ENCODE measurements at regions of chr4 and their contacts with region 1.

Region 1: DNA sequence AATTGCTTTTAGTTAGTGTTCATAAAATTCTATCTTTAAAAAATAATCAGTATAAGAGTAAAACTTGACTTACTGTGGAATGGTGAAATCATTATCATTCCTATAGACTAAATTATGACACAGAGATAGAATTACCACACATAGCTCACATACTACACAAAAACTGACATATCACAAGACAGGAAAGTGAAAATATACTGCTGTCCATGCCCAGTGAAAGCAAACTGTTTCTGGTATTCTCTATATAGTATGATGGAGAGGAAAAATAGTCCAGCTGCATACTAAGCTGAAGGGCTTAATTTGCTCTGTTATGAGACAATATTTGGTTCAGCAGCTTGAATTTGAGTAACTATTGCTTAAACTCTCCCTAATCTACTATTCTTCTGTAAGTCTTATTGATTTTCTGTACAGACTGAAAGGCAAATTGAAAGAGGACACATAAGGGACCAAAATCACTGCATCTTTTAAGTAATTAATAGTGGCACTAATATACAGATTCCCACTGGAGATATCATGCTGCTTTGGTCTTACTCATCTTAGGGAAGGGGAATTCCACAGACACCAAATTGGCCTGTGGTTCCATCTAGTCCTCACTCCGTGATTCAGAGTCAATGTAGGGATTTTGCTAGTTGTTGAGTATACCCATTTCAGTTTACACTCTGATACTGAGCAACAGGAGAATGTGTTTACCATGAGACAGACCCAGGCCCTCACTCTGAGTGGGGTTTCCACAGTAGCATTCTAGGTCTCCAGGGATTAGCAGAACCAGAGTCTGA is 47.4 kb upstream of the AGA start:
- DNase-seq: no peak
- ATAC-seq: no peak
- H3K4me3 ChIP-seq: no peak overlapping the region
- H3K4me3 Mint-ChIP-seq: no peak overlapping the region
- H3K27ac ChIP-seq: no peak overlapping the region
- H3K27ac Mint-ChIP-seq: no peak overlapping the region
- H3K4me1 ChIP-seq: peaks cover 0 to 3% of the 10 kb centered on the region in 2 experiments
- H3K4me1 Mint-ChIP-seq: peaks cover 0 to 8% (median 6%) of the 10 kb centered on the region in 3 donors
- H3K27me3 ChIP-seq: no peaks in the 10 kb centered on the region
- H3K27me3 Mint-ChIP-seq: no peaks in the 10 kb centered on the region

Region 2: GRCh38 chr4:177204126-177204525 is 285.5 kb before region 1 on chr4:
- CTCF ChIA-PET with region 1: no interaction called
- POLR2A ChIA-PET with region 1: no interaction called
- DNase-seq: no peak
- ATAC-seq: no peak
- H3K4me3 ChIP-seq: no peak overlapping the region
- H3K4me3 Mint-ChIP-seq: no peak overlapping the region
- H3K27ac ChIP-seq: no peak overlapping the region
- H3K27ac Mint-ChIP-seq: no peak overlapping the region
- H3K4me1 ChIP-seq: no peaks in the 10 kb centered on the region
- H3K4me1 Mint-ChIP-seq: no peaks in the 10 kb centered on the region
- H3K27me3 ChIP-seq: no peaks in the 10 kb centered on the region
- H3K27me3 Mint-ChIP-seq: peaks cover 5 to 6% of the 10 kb centered on the region in 2 donors

Region 3: GRCh38 chr4:177427192-177427591 is 62.5 kb before region 1 on chr4:
- CTCF ChIA-PET with region 1: no interaction called
- POLR2A ChIA-PET with region 1: interaction called in 1 of 2 experiments, 11 read pairs
- DNase-seq: no peak
- ATAC-seq: no peak
- H3K4me3 ChIP-seq: no peak overlapping the region
- H3K4me3 Mint-ChIP-seq: no peak overlapping the region
- H3K27ac ChIP-seq: no peak overlapping the region
- H3K27ac Mint-ChIP-seq: no peak overlapping the region
- H3K4me1 ChIP-seq: no peaks in the 10 kb centered on the region
- H3K4me1 Mint-ChIP-seq: no peaks in the 10 kb centered on the region
- H3K27me3 ChIP-seq: peaks cover 0 to 4% of the 10 kb centered on the region in 2 experiments
- H3K27me3 Mint-ChIP-seq: peaks cover 0 to 3% of the 10 kb centered on the region in 2 donors

Region 4: GRCh38 chr4:177473991-177474390 is 15.7 kb before region 1 on chr4:
- CTCF ChIA-PET with region 1: no interaction called
- POLR2A ChIA-PET with region 1: no interaction called
- DNase-seq: no peak
- ATAC-seq: no peak
- H3K4me3 ChIP-seq: no peak overlapping the region
- H3K4me3 Mint-ChIP-seq: no peak overlapping the region
- H3K27ac ChIP-seq: no peak overlapping the region
- H3K27ac Mint-ChIP-seq: no peak overlapping the region
- H3K4me1 ChIP-seq: no peaks in the 10 kb centered on the region
- H3K4me1 Mint-ChIP-seq: no peaks in the 10 kb centered on the region
- H3K27me3 ChIP-seq: peaks cover 0 to 3% of the 10 kb centered on the region in 2 experiments
- H3K27me3 Mint-ChIP-seq: no peaks in the 10 kb centered on the region

Measured in T-cell (primary cell).